ENCODE measurements at regions of chr6 and their contacts with region 1.

Region 1: GRCh38 chr6:13454286-13455221 is 32.8 kb downstream of the GFOD1 start:
- DNase-seq: no peak
- H3K4me3 ChIP-seq: no peak overlapping the region
- H3K27ac ChIP-seq: no peak overlapping the region
- H3K4me1 ChIP-seq: no peaks in the 10 kb centered on the region
- H3K27me3 ChIP-seq: no peaks in the 10 kb centered on the region
- CTCF ChIP-seq: peak in 1 of 4 experiments; percentile 12
- POLR2A ChIP-seq: no peak

Region 2: GRCh38 chr6:13413900-13414555 is 40.5 kb before region 1 on chr6:
- intact Hi-C with region 1: loop called (anchors 5 kb)
- DNase-seq: no peak
- H3K4me3 ChIP-seq: no peak overlapping the region
- H3K27ac ChIP-seq: no peak overlapping the region
- H3K4me1 ChIP-seq: no peaks in the 10 kb centered on the region
- H3K27me3 ChIP-seq: no peaks in the 10 kb centered on the region
- CTCF ChIP-seq: no peak
- POLR2A ChIP-seq: no peak